Mammary epithelial cell (primary cell): ENCODE measurements at regions of chr11 and their contacts with region 1.

Region 1: GRCh38 chr11:47980245-47981049 is at the start of gene PTPRJ:
- DNase-seq: peak; percentile 31
- H3K4me3 ChIP-seq: peak within 1 kb of the TSS; percentile 41 to 51 (median 43)
- H3K27ac ChIP-seq: no peak within 1 kb of the TSS
- H3K4me1 ChIP-seq: no peaks in the 10 kb centered on the region
- H3K27me3 ChIP-seq: peaks cover 11% of the 10 kb centered on the region
- CTCF ChIP-seq: no peak
- total RNA-seq, gene PTPRJ: 0.73 to 1.5 TPM

Region 2: GRCh38 chr11:47946682-47947575 is 33.5 kb before region 1 on chr11:
- CTCF ChIA-PET with region 1: no interaction called
- dilution Hi-C with region 1: no loop called
- in situ Hi-C with region 1: no loop called
- intact Hi-C with region 1: loop called (anchors 2 kb)
- DNase-seq: peak; percentile 98
- H3K4me3 ChIP-seq: no peak overlapping the region
- H3K27ac ChIP-seq: no peak overlapping the region
- H3K4me1 ChIP-seq: peaks cover 14% of the 10 kb centered on the region
- H3K27me3 ChIP-seq: no peaks in the 10 kb centered on the region
- CTCF ChIP-seq: no peak

Region 3: GRCh38 chr11:48052183-48053045 is 72.0 kb after region 1 on chr11:
- CTCF ChIA-PET with region 1: no interaction called
- dilution Hi-C with region 1: loop called (anchors 5 kb)
- in situ Hi-C with region 1: no loop called
- intact Hi-C with region 1: no loop called
- DNase-seq: peak; percentile 39
- H3K4me3 ChIP-seq: no peak overlapping the region
- H3K27ac ChIP-seq: no peak overlapping the region
- H3K4me1 ChIP-seq: peaks cover 4% of the 10 kb centered on the region
- H3K27me3 ChIP-seq: no peaks in the 10 kb centered on the region
- CTCF ChIP-seq: no peak